Activated B cell treated with CpG ODN at 0.5 μM for 24 hours (primary cell): ENCODE measurements at regions of chr21 and their contacts with region 1.

Region 1: DNA sequence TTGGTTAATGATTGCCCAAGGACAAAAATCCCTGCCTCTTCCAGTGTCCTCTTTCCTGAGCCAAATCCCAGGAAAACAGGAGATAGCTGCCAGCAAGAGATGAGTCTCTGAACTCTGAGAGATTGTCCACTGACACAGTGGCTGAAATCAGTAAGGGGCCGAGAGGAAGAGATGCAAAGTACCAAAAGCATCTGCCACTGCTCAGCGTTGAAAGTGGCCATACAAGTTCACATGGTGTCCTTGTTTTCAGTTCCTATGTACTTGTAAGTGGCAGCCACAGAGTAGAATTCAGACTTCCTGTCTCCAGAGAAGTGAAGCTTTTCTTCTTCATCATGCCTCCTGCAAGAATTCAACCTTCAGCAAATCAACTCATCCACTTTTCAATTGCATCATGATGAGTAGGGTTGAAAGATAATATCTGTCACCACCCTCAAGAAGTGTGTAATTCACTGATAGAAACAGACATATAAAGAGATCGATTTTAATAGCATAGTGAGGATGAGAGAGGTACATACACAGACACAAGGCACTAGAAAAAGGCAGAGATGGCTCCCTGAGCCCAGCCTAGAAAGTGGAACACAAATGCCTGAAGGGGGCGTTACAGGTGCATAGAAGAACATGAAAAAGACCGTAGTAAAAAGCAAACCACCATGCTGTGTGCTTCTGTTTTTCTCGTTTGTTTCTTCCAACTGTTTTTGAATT is 185.8 kb downstream of the MRPL39 start:
- DNase-seq: no peak
- ATAC-seq: peak; percentile 81
- H3K4me3 Mint-ChIP-seq: peak overlapping the region; percentile 68
- H3K27ac Mint-ChIP-seq: peak overlapping the region; percentile 91
- H3K4me1 Mint-ChIP-seq: peaks cover 63% of the 10 kb centered on the region
- H3K27me3 Mint-ChIP-seq: no peaks in the 10 kb centered on the region
- CTCF ChIP-seq: peak; percentile 65

Region 2: DNA sequence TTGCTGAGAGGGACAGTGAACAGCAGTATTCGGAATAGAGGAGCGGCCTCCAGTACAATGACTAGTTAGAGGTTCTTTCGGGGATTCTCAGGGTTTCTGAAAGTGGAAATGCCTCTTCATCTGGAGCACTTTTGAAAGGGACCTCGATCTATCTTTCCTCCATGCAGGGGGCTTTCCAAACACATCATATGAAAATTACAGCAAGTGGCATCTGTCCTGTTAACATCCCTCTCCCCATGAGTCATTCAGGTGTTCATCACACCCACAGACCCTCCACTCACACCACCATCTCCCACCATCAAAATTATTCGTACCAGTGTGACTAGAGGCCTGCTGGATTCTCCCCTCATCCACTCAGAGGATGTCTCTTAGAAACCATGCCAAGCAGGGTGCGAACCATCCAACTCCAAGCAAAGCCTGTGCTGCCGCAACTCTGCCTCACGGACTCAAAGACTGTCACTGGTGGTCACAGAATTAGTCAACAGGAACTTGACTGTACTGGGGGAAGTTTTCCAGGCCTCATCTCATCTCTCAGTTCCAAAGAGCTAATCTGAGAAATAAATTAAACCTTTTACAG is 25.3 kb before region 1 on chr21:
- CTCF ChIA-PET with region 1: no interaction called
- POLR2A ChIA-PET with region 1: interaction called, 5 read pairs
- intact Hi-C with region 1: loop called (anchors 1 kb)
- DNase-seq: peak; percentile 33
- ATAC-seq: peak; percentile 88
- H3K4me3 Mint-ChIP-seq: peak overlapping the region; percentile 81
- H3K27ac Mint-ChIP-seq: peak overlapping the region; percentile 84
- H3K4me1 Mint-ChIP-seq: peaks cover 31% of the 10 kb centered on the region
- H3K27me3 Mint-ChIP-seq: no peaks in the 10 kb centered on the region
- CTCF ChIP-seq: no peak

Region 3: DNA sequence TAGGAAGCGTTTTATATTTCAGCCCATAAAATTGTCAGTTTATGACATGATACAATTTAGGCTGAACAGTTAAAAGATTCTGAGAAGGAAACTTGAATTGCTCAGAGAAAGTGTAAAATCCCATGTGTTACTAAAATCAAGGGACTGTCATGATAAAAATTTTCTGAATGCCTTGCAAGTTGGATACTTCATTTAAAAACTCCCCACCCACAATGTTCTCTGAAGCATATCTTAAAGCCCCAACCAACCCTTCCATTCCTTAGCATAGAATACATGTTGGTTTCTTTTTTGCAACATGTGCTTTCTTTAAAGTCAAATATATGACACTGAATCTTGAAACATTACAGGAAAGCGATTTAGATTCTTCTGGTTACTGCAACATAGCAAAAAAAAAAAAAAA is 88.4 kb after region 1 on chr21:
- CTCF ChIA-PET with region 1: interaction called, 4 read pairs
- POLR2A ChIA-PET with region 1: interaction called, 4 read pairs
- intact Hi-C with region 1: loop called (anchors 1 kb)
- DNase-seq: no peak
- ATAC-seq: peak; percentile 77
- H3K4me3 Mint-ChIP-seq: peak overlapping the region; percentile 55
- H3K27ac Mint-ChIP-seq: peak overlapping the region; percentile 63
- H3K4me1 Mint-ChIP-seq: peaks cover 45% of the 10 kb centered on the region
- H3K27me3 Mint-ChIP-seq: no peaks in the 10 kb centered on the region
- CTCF ChIP-seq: no peak

Region 4: GRCh38 chr21:25573409-25574206 is 152.1 kb after region 1 on chr21:
- CTCF ChIA-PET with region 1: interaction called, 18 read pairs
- POLR2A ChIA-PET with region 1: interaction called, 157 read pairs
- intact Hi-C with region 1: loop called (anchors 1 kb)
- DNase-seq: no peak
- ATAC-seq: peak; percentile 53
- H3K4me3 Mint-ChIP-seq: peak overlapping the region; percentile 75
- H3K27ac Mint-ChIP-seq: peak overlapping the region; percentile 90
- H3K4me1 Mint-ChIP-seq: peaks cover 90% of the 10 kb centered on the region
- H3K27me3 Mint-ChIP-seq: no peaks in the 10 kb centered on the region
- CTCF ChIP-seq: no peak

Region 5: DNA sequence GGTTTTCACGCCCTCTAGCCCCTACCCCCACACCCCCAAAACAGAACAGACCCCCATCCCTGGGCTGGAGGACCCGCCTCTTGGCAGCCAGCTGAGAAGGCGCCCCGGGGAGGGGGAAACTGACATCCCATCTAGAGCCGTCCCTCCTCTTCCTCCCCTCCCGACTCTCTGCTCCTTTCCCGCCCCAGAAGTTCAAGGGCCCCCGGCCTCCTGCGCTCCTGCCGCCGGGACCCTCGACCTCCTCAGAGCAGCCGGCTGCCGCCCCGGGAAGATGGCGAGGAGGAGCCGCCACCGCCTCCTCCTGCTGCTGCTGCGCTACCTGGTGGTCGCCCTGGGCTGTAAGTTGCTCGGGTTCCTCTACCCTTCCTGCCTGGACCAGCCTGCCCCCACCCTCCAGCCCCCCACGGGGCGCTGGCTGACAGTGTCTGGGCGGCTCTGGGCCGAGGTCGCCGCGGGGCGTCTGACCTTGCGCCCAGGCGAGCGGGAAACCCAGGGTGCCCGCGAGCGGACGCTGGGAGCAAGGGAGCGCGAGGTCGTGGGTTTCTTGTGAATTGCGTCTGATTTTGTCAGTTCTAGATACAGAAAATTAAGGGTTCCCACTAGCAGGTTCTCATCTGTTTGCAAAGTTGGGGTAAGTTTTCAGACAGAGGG is 218.2 kb after region 1 on chr21:
- CTCF ChIA-PET with region 1: no interaction called
- POLR2A ChIA-PET with region 1: no interaction called
- intact Hi-C with region 1: loop called (anchors 1 kb)
- DNase-seq: peak; percentile 55
- ATAC-seq: peak; percentile 88
- H3K4me3 Mint-ChIP-seq: peak overlapping the region; percentile 75
- H3K27ac Mint-ChIP-seq: peak overlapping the region; percentile 63
- H3K4me1 Mint-ChIP-seq: peaks cover 17% of the 10 kb centered on the region
- H3K27me3 Mint-ChIP-seq: peaks cover 4% of the 10 kb centered on the region
- CTCF ChIP-seq: peak; percentile 16

Region 6: GRCh38 chr21:25801217-25802014 is 379.9 kb after region 1 on chr21:
- CTCF ChIA-PET with region 1: no interaction called
- POLR2A ChIA-PET with region 1: no interaction called
- intact Hi-C with region 1: loop called (anchors 5 kb)
- DNase-seq: peak; percentile 56
- ATAC-seq: peak; percentile 100
- H3K4me3 Mint-ChIP-seq: no peak overlapping the region
- H3K27ac Mint-ChIP-seq: no peak overlapping the region
- H3K4me1 Mint-ChIP-seq: peaks cover 6% of the 10 kb centered on the region
- H3K27me3 Mint-ChIP-seq: peaks cover 11% of the 10 kb centered on the region
- CTCF ChIP-seq: peak; percentile 55